ENCODE measurements at regions of chr22 and their contacts with region 1.

Region 1: GRCh38 chr22:41403532-41404318 is 22.0 kb downstream of the TEF start:
- DNase-seq: peak; percentile 66 to 90
- H3K4me3 ChIP-seq: no peak overlapping the region
- H3K27ac ChIP-seq: no peak overlapping the region
- H3K4me1 ChIP-seq: peaks cover 0 to under 1% (median 0%) of the 10 kb centered on the region in 4 experiments; a peak in 1 of 7 replicates
- H3K27me3 ChIP-seq: no peaks in the 10 kb centered on the region
- CTCF ChIP-seq: peak; percentile 95 to 100 (median 99)
- EP300 ChIP-seq: no peak
- POLR2A ChIP-seq: no peak
- RAD21 ChIP-seq: peak; percentile 99

Region 2: GRCh38 chr22:41425660-41426365 is 22.1 kb after region 1 on chr22:
- CTCF ChIA-PET with region 1: interaction called, 18 read pairs
- POLR2A ChIA-PET with region 1: interaction called, 3 read pairs
- DNase-seq: no peak
- H3K4me3 ChIP-seq: no peak overlapping the region
- H3K27ac ChIP-seq: no peak overlapping the region
- H3K4me1 ChIP-seq: no peaks in the 10 kb centered on the region; a peak in 1 of 7 replicates
- H3K27me3 ChIP-seq: no peaks in the 10 kb centered on the region
- CTCF ChIP-seq: no peak
- EP300 ChIP-seq: no peak
- POLR2A ChIP-seq: no peak
- RAD21 ChIP-seq: no peak

Region 3: GRCh38 chr22:41479671-41480396 is 76.1 kb after region 1 on chr22:
- CTCF ChIA-PET with region 1: interaction called, 10 read pairs
- POLR2A ChIA-PET with region 1: no interaction called
- DNase-seq: peak; percentile 21 to 61
- H3K4me3 ChIP-seq: peak overlapping the region in 2 of 4 experiments; percentile 0 to 11; a peak in 2 of 8 replicates
- H3K27ac ChIP-seq: peak overlapping the region; percentile 20; the same call in 1 of the 2 replicates
- H3K4me1 ChIP-seq: peaks cover 24 to 39% (median 26%) of the 10 kb centered on the region in 4 experiments
- H3K27me3 ChIP-seq: no peaks in the 10 kb centered on the region
- CTCF ChIP-seq: peak in 2 of 3 experiments; percentile 28 to 41; a peak in 2 of 4 replicates
- EP300 ChIP-seq: no peak
- POLR2A ChIP-seq: no peak
- RAD21 ChIP-seq: peak; percentile 17 to 21; a peak in 2 of 4 replicates

Region 4: DNA sequence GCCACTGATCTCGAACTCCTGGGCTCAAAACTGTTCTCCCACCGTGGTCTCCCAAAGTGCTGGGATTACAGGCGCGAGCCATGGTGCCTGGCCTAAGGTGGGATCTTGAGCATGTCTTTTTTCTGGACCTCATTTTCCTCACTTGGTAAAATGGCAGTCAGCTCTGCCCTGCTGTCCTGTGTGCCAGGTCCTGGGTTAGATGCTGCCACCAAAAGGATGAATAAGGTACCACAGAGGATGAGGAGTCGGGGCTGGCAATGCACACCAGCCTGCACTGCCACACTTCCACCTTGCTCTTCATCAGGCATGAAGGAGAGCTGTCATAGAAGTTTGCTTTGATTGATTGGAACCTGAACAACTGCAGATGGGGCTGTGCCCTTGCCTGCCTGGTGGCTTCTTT is 97.5 kb after region 1 on chr22:
- CTCF ChIA-PET with region 1: interaction called, 20 read pairs
- POLR2A ChIA-PET with region 1: interaction called, 3 read pairs
- DNase-seq: no peak
- H3K4me3 ChIP-seq: no peak overlapping the region
- H3K27ac ChIP-seq: no peak overlapping the region
- H3K4me1 ChIP-seq: no peaks in the 10 kb centered on the region
- H3K27me3 ChIP-seq: no peaks in the 10 kb centered on the region
- CTCF ChIP-seq: peak; percentile 57 to 64 (median 59)
- EP300 ChIP-seq: no peak
- POLR2A ChIP-seq: no peak
- RAD21 ChIP-seq: peak; percentile 75 to 78

Region 5: DNA sequence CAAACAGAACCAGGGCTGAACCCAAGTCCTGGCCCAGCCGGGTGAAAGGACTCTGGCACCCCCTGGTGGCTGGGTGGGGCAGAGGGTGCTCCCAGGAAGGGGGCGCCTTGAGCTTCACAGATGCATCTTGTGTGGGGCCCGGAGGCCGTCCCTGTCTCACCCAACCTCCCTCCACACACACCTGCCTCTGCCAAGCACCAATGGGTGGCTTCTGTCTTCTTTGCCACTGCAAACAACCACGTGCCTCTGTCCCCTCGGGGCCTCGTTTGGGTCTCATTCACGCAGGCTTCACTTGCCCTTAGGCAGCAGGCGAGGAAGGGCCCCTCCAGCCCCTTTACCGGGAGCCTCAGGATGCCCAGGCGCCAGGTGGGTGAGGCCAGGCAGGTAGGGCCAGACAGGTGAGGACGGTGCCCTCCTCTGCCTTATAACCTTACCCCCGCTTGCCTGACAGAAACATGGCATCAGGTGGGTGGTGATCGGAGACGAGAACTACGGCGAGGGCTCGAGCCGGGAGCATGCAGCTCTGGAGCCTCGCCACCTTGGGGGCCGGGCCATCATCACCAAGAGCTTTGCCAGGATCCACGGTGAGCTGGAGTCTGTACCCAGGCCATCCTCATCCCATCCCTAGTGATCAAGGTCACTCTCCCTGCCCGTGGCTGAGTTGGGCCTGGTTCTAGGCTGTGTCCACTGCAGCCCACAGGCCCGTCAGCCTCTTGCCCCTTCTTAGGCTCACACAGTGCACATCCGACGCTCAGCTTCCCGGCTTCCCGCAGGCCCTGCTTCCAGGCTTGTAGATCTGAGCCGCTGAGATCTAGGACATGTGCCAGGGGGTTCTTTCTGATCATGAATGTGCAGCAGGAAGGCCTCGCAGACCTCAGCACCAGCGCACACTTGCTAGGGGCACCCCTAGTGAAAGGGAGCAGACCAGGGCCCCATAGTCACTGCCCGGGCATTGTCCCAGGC is 123.4 kb after region 1 on chr22:
- CTCF ChIA-PET with region 1: interaction called, 33 read pairs
- POLR2A ChIA-PET with region 1: interaction called, 16 read pairs
- DNase-seq: peak in 1 of 2 experiments; percentile 90
- H3K4me3 ChIP-seq: no peak overlapping the region
- H3K27ac ChIP-seq: no peak overlapping the region
- H3K4me1 ChIP-seq: no peaks in the 10 kb centered on the region; a peak in 1 of 7 replicates
- H3K27me3 ChIP-seq: no peaks in the 10 kb centered on the region
- CTCF ChIP-seq: peak; percentile 76 to 91 (median 85)
- EP300 ChIP-seq: no peak
- POLR2A ChIP-seq: peak in 1 of 2 experiments; percentile 62; a peak in 1 of 3 replicates
- RAD21 ChIP-seq: peak; percentile 70 to 76

Region 6: DNA sequence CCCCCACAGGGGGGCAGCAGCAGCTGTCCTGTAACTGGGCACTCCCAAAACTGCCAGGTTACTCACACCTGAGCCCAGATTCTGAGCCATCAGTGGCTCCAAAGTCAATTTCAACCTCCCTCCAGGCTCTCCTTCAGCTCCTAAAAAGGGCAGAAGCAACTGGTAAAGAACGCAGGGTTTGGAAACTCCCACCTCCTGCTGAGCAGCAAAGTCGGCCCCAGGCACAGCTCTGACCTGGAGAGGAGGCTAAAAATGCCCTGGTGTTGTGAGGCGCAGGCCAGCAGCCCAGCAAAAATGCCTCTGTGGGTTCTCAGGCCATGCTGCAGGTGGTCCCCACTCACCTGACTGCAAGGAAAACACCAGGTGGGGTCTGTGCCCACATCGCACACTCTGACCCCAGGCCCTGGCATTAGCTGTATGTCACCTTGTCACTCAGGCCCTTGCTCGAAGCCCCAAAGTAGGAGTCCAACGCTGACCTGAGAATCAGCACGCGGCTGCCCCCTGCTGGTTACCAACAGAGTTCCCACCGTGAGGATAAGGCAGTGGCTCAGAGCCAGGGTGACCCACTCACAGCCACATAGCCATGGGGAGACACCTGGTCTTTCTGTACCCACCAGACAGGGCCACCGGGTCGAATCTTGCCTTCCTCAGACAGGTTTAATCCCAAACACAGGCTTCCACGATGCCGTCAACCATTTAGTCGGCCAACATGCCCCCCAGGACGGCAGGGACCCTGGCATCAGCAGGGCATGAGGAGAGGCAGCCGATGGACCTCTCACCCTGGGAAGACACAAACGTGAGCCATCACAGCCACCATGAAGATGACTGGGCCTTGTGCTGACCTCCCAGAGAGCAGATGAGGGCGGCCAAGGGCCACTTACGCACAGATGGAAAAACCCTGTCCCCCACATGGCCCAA is 129.4 kb after region 1 on chr22:
- CTCF ChIA-PET with region 1: interaction called, 33 read pairs
- POLR2A ChIA-PET with region 1: interaction called, 7 read pairs
- DNase-seq: peak in 1 of 2 experiments; percentile 91
- H3K4me3 ChIP-seq: no peak overlapping the region
- H3K27ac ChIP-seq: peak overlapping the region; percentile 48; the same call in 1 of the 2 replicates
- H3K4me1 ChIP-seq: peaks cover 0 to 7% (median 5%) of the 10 kb centered on the region in 4 experiments; a peak in 4 of 7 replicates
- H3K27me3 ChIP-seq: no peaks in the 10 kb centered on the region
- CTCF ChIP-seq: peak; percentile 83 to 91 (median 91)
- EP300 ChIP-seq: no peak
- POLR2A ChIP-seq: peak in 1 of 2 experiments; percentile 50; a peak in 1 of 3 replicates
- RAD21 ChIP-seq: peak; percentile 45 to 67

Measured in H1 (cell line).